Left colon (tissue), 2 donors: ENCODE measurements at regions of chr14 and their contacts with region 1.

Region 1: GRCh38 chr14:80987235-80988032 is 32.0 kb downstream of the TSHR start:
- DNase-seq: peak; percentile 35 to 73
- ATAC-seq: peak; percentile 97

Region 2: GRCh38 chr14:80954687-80955299 is 32.6 kb before region 1 on chr14:
- intact Hi-C with region 1: loop called in 1 of 2 experiments (anchors 1 kb)
- DNase-seq: peak; percentile 62 to 79
- ATAC-seq: peak; percentile 89